Panc1 (cell line): ENCODE measurements at regions of chr3 and their contacts with region 1.

Region 1: GRCh38 chr3:196726788-196727675 is 12.6 kb upstream of the PAK2 start:
- DNase-seq: peak; percentile 73
- ATAC-seq: peak; percentile 86
- H3K4me3 ChIP-seq: no peak overlapping the region
- H3K27ac ChIP-seq: no peak overlapping the region
- H3K4me1 ChIP-seq: 0 out of 2 replicates have a peak, but pooled peaks cover 3% of the 10 kb centered on the region
- H3K27me3 ChIP-seq: no peaks in the 10 kb centered on the region
- CTCF ChIP-seq: no peak

Region 2: DNA sequence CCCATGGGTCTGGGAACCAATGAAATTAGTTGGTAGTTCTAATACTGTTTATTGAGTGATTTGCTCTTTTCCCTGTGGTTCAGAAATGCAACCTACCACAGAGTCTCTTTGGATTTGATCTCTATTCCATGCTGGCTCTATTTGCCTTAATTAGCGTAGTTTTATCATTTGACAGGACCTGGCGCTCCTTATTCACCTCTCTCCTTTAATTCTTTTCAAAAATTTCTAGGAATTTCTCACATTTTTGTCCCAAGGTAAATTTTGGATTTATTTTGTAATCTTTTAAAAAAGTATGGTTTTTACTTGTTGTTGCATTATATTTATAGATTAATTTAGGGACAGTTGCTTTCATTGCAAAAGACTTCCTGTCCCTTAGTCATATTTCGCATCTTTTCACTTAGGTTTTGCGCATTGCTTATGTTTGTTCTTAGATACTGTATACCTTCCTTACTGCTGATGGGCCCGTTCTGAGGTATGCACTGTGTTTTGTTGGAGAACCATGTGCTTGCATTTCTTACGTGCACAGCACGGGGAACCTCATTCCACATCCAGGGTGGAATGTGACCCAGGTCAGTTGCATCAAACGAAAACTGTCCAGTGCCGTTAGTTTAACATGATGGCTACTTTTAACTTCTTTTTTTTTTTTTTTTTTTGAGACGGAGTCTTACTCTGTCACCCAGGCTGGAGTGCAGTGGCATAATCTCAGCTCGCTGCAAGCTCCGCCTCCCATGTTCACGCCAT is 167.7 kb after region 1 on chr3:
- CTCF ChIA-PET with region 1: no interaction called
- POLR2A ChIA-PET with region 1: interaction called, 10 read pairs
- in situ Hi-C with region 1: no loop called
- intact Hi-C with region 1: no loop called
- DNase-seq: no peak
- ATAC-seq: no peak
- H3K4me3 ChIP-seq: no peak overlapping the region
- H3K27ac ChIP-seq: no peak overlapping the region
- H3K4me1 ChIP-seq: no peaks in the 10 kb centered on the region
- H3K27me3 ChIP-seq: no peaks in the 10 kb centered on the region
- CTCF ChIP-seq: no peak